CD8-positive, alpha-beta T cell (primary cell): ENCODE measurements at regions of chr18 and their contacts with region 1.

Region 1: GRCh38 chr18:54119524-54120019 is 104.9 kb downstream of the MBD2 start:
- DNase-seq: peak in 2 of 9 experiments; percentile 41 to 53
- ATAC-seq: peak; percentile 34
- H3K4me3 ChIP-seq: no peak overlapping the region
- H3K4me3 Mint-ChIP-seq: peak overlapping the region; percentile 32
- H3K27ac ChIP-seq: no peak overlapping the region
- H3K27ac Mint-ChIP-seq: no peak overlapping the region
- H3K4me1 ChIP-seq: no peaks in the 10 kb centered on the region
- H3K4me1 Mint-ChIP-seq: peaks cover 3% of the 10 kb centered on the region
- H3K27me3 ChIP-seq: no peaks in the 10 kb centered on the region
- H3K27me3 Mint-ChIP-seq: peaks cover 8% of the 10 kb centered on the region
- CTCF ChIP-seq: peak; percentile 78

Region 2: DNA sequence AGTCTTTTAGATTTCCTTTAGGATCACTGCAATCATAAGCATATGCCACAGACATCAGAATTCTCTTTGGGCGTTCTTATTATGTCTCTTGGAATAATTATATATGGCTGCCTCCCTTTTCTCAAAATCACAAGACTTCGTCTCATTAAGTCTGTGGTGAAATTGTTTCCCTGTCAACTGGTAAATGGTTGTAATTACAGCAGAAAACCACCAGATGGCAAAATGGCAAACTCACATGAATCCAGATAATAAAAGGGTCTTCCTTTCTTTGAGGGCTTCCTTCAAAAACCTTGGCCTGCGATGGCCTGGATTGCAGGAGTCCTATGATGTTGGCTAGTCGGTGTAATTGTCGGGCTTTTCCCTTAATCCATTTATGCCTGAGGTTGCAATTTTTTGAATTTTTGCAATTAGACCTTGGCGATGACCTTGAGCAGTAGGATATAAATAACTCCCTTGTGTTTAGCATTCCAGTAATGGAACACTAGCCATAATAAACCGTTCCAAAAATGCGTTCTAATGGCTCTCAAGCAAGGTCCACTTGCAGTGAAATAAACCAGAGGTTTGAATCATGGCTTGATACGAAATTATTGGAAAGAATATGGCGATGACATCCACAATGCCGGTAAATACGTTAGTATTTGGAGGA is 551.5 kb before region 1 on chr18:
- CTCF ChIA-PET with region 1: interaction called, 4 read pairs
- POLR2A ChIA-PET with region 1: no interaction called
- intact Hi-C with region 1: loop called in 1 of 2 experiments (anchors 1 kb)
- DNase-seq: peak in 2 of 9 experiments; percentile 12 to 35
- ATAC-seq: no peak
- H3K4me3 ChIP-seq: no peak overlapping the region
- H3K4me3 Mint-ChIP-seq: no peak overlapping the region
- H3K27ac ChIP-seq: no peak overlapping the region
- H3K27ac Mint-ChIP-seq: no peak overlapping the region
- H3K4me1 ChIP-seq: no peaks in the 10 kb centered on the region
- H3K4me1 Mint-ChIP-seq: no peaks in the 10 kb centered on the region
- H3K27me3 ChIP-seq: no peaks in the 10 kb centered on the region
- H3K27me3 Mint-ChIP-seq: no peaks in the 10 kb centered on the region
- CTCF ChIP-seq: peak; percentile 42

Region 3: GRCh38 chr18:53909668-53910067 is 209.9 kb before region 1 on chr18:
- CTCF ChIA-PET with region 1: no interaction called
- POLR2A ChIA-PET with region 1: no interaction called
- intact Hi-C with region 1: loop called in 1 of 2 experiments (anchors 2 kb)
- DNase-seq: peak in 2 of 9 experiments; percentile 9 to 14
- ATAC-seq: no peak
- H3K4me3 ChIP-seq: no peak overlapping the region
- H3K4me3 Mint-ChIP-seq: no peak overlapping the region
- H3K27ac ChIP-seq: no peak overlapping the region
- H3K27ac Mint-ChIP-seq: no peak overlapping the region
- H3K4me1 ChIP-seq: no peaks in the 10 kb centered on the region
- H3K4me1 Mint-ChIP-seq: no peaks in the 10 kb centered on the region
- H3K27me3 ChIP-seq: no peaks in the 10 kb centered on the region
- H3K27me3 Mint-ChIP-seq: peaks cover 10% of the 10 kb centered on the region
- CTCF ChIP-seq: no peak

Region 4: DNA sequence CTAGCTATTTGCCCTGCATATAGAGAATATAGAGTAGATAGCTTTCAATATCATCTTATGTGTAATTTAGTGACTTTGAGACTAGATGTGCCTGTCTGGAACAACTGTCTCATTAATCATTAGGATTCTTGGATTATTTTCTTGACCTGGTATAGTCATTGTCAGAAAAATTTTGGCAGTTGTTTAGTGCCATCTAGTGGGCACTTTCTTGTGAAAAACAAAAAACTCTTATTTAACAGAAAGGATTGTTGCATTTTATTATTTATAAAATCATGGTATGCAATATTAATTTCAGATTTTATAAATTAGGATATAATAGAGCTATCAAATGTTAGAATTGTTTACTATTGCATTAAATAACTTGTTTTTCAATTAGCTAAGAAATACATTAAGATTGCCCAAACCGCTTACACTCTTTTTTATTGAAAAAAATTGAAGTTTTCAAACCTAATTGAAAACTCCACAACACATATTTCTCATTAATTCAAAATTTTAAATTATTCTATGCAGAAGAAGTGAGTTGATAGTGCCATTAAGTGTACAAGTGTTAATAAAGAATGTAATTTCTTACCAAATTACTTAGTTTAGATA is 551.8 kb after region 1 on chr18:
- CTCF ChIA-PET with region 1: no interaction called
- POLR2A ChIA-PET with region 1: no interaction called
- intact Hi-C with region 1: loop called in 1 of 2 experiments (anchors 2 kb)
- DNase-seq: peak in 2 of 9 experiments; percentile 17 to 41
- ATAC-seq: no peak
- H3K4me3 ChIP-seq: no peak overlapping the region
- H3K4me3 Mint-ChIP-seq: no peak overlapping the region
- H3K27ac ChIP-seq: no peak overlapping the region
- H3K27ac Mint-ChIP-seq: no peak overlapping the region
- H3K4me1 ChIP-seq: no peaks in the 10 kb centered on the region
- H3K4me1 Mint-ChIP-seq: no peaks in the 10 kb centered on the region
- H3K27me3 ChIP-seq: no peaks in the 10 kb centered on the region
- H3K27me3 Mint-ChIP-seq: no peaks in the 10 kb centered on the region
- CTCF ChIP-seq: peak; percentile 71